ENCODE measurements at regions of chr14 and their contacts with region 1.

Region 1: GRCh38 chr14:88189417-88190191 is 133.5 kb downstream of the KCNK10 start:
- DNase-seq: peak; percentile 78
- ATAC-seq: peak; percentile 79
- H3K4me3 Mint-ChIP-seq: peak overlapping the region; percentile 11
- H3K27ac Mint-ChIP-seq: no peak overlapping the region
- H3K4me1 Mint-ChIP-seq: peaks cover 5% of the 10 kb centered on the region
- H3K27me3 Mint-ChIP-seq: peaks cover 15% of the 10 kb centered on the region

Region 2: DNA sequence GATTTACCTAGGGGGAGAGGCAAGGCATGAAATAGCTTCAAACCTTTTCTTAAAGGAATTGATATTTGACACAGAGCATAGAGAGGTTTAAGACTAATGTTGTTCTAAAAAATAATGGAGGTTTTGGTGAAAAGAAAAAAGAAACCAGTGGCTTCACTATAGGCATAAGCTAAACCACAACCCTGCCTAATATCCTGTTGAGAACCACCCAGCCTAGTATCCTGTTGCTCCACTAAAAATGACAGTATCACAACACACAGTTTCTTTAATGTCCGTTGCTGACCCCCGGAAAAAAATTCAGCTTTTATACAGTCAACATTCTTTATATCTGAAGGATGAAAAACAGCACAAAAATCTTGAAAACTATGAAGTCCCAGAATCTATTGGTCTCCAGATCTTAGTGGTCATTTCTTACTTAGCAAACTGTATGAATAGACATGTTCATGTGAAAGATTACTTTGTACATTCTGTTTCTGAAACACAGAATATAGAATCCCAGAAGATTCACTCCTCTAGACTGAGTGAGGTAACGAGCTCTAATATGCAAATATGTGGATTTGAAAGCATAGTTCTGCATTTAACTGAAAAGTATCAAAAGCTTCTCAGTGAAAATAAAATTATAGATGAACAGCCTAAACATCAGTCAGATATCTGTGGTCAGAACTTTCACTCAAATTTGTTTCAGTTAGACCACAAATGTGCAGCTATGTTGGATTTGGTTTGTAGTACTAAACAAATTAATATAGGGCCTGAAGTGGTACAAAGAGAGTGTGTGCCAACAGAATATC is 237.1 kb before region 1 on chr14:
- CTCF ChIA-PET with region 1: interaction called, 71 read pairs
- POLR2A ChIA-PET with region 1: no interaction called
- DNase-seq: peak; percentile 45
- ATAC-seq: peak; percentile 88
- H3K4me3 Mint-ChIP-seq: peak overlapping the region; percentile 75
- H3K27ac Mint-ChIP-seq: peak overlapping the region; percentile 94
- H3K4me1 Mint-ChIP-seq: peaks cover 52% of the 10 kb centered on the region
- H3K27me3 Mint-ChIP-seq: no peaks in the 10 kb centered on the region

Region 3: GRCh38 chr14:88168498-88169165 is 21.0 kb before region 1 on chr14:
- CTCF ChIA-PET with region 1: interaction called, 27 read pairs
- POLR2A ChIA-PET with region 1: no interaction called
- DNase-seq: peak; percentile 69
- ATAC-seq: peak; percentile 92
- H3K4me3 Mint-ChIP-seq: peak overlapping the region; percentile 13
- H3K27ac Mint-ChIP-seq: no peak overlapping the region
- H3K4me1 Mint-ChIP-seq: peaks cover 36% of the 10 kb centered on the region
- H3K27me3 Mint-ChIP-seq: peaks cover 34% of the 10 kb centered on the region

Region 4: DNA sequence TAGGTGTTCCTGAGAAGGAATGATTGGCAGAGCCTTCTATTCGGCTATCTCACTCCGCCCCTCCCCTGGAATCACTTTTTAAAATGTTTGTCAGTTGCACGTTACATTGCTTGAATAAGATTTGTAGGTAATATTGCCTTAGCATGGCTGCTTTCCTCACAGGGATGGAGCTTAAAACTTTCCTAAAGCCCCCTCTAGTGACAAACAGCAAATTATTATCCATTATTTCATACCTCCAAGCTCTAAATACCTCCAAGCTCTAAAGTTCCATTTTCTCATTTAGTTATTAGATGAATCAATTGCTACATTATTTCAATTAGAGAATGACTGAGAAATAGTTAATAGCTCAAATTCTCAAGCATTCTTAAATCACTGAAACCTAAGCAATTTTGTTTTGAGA is 190.8 kb after region 1 on chr14:
- CTCF ChIA-PET with region 1: interaction called, 18 read pairs
- POLR2A ChIA-PET with region 1: no interaction called
- DNase-seq: no peak
- ATAC-seq: no peak
- H3K4me3 Mint-ChIP-seq: no peak overlapping the region
- H3K27ac Mint-ChIP-seq: no peak overlapping the region
- H3K4me1 Mint-ChIP-seq: peaks cover 14% of the 10 kb centered on the region
- H3K27me3 Mint-ChIP-seq: peaks cover 17% of the 10 kb centered on the region